Activated naive CD4-positive, alpha-beta T cell treated with anti-CD3 and anti-CD28 coated beads, Interleukin-2, amount 10 ng/mL, durations not matched to agents 7 days and 5 days (primary cell): ENCODE measurements at regions of chr7 and their contacts with region 1.

Region 1: DNA sequence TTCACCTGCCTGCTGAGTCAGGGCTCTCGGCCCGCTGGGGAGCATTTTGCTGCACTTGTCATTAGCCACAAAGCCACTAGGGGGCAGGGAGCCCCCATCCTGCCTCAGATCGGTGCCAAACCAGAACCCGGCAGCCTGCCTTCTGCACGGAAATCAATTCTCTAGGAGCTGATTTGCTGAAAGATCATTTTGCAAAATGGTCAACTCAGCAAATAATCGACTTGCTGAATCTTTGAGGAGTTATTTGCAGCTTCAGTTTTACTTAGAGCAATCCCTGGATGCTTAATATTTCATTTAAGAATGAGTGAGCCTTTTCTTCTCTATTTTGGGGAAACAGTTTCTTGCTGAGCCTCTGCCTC is 1.7 kb upstream of the GIMAP8 start:
- DNase-seq: peak; percentile 92
- H3K4me3 Mint-ChIP-seq: peak overlapping the region; percentile 89
- H3K27ac Mint-ChIP-seq: peak overlapping the region; percentile 91
- H3K4me1 Mint-ChIP-seq: peaks cover 52% of the 10 kb centered on the region
- H3K27me3 Mint-ChIP-seq: no peaks in the 10 kb centered on the region

Region 2: GRCh38 chr7:150514748-150515222 is 66.0 kb after region 1 on chr7 and contains the start of gene GIMAP7:
- CTCF ChIA-PET with region 1: interaction called, 44 read pairs
- DNase-seq: peak; percentile 83
- H3K4me3 Mint-ChIP-seq: peak within 1 kb of the TSS; percentile 98
- H3K27ac Mint-ChIP-seq: peak within 1 kb of the TSS; percentile 99
- H3K4me1 Mint-ChIP-seq: peaks cover 48% of the 10 kb centered on the region
- H3K27me3 Mint-ChIP-seq: no peaks in the 10 kb centered on the region

Region 3: DNA sequence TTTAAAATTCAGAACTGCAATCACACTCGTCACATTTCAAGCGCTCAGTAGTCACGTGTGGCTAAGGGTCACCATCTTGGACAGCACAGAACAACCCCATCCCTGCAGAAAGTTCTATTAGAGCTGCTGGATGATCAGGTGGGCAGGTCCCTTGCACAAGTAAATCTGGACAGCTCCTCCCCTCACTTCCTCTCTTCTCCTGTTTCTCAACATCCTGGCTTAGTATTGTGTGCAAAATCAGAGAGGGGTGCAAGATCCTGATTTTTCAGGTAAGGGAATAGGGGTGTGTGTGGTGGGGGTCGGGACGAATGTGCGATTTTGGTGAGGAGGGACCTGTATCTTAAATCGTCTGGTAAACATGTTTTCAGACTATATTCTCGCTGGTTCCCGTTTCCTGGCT is 118.4 kb after region 1 on chr7 and contains the start of gene GIMAP4:
- CTCF ChIA-PET with region 1: interaction called, 37 read pairs
- DNase-seq: peak; percentile 52
- H3K4me3 Mint-ChIP-seq: peak within 1 kb of the TSS; percentile 90
- H3K27ac Mint-ChIP-seq: peak within 1 kb of the TSS; percentile 92
- H3K4me1 Mint-ChIP-seq: peaks cover 75% of the 10 kb centered on the region
- H3K27me3 Mint-ChIP-seq: no peaks in the 10 kb centered on the region

Region 4: DNA sequence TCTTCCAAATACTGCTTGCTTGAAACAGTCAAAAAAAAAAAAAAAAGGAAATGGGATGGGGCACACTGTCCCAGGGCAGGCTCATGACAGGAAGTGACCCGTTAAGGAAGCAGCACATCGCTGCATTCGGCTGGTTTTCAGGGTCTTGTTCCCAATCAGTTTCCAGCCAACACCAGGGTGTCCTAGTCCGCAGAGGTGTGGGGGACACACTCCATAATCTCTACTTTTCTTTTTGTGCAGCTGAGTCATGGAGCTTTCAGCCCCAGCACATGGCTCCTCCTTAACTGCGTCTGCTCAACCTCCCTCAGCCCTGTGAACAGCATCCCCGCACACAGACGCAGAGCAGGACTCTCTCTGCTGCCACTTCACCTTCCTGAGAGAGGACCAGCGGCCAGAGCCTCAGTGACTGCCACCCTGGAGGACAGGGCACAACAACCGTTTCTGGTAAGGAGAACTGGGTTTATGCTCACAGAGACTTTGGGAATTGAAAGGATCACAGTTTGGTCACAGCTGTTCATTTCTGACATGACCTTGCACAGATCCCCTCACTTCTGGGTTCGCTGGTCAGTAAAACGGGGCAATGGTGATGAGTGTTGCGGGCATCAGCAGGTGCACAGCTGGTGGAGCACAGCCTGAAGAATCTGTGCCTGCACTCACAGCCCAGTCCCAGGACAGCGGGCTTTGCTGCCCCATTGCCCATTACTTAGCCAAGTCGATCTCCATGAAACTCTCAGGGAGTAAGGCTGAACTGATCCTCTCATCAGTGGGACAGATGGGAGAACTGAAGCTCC is 288.7 kb after region 1 on chr7 and contains the start of gene GIMAP5:
- CTCF ChIA-PET with region 1: interaction called, 15 read pairs
- DNase-seq: peak; percentile 73
- H3K4me3 Mint-ChIP-seq: peak within 1 kb of the TSS; percentile 88
- H3K27ac Mint-ChIP-seq: peak within 1 kb of the TSS; percentile 91
- H3K4me1 Mint-ChIP-seq: peaks cover 72% of the 10 kb centered on the region
- H3K27me3 Mint-ChIP-seq: no peaks in the 10 kb centered on the region

Region 5: DNA sequence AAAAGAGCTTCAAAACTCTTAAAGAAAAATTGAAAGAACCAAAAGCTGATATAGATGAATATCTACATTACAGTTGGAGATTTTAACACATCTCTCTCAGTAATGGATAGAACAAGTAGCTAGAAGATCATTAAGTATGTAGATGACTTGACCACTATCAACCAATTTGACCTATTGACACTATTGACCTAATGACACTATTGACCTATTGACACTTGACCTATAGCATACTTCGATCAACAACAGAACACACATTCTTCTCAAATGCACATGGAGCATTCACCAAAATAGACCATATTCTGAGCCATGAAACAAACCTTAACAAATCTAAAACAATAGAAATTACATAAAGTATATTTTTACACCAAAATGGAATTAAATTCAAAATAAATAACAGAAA is 310.7 kb after region 1 on chr7:
- CTCF ChIA-PET with region 1: interaction called, 72 read pairs
- DNase-seq: no peak
- H3K4me3 Mint-ChIP-seq: no peak overlapping the region
- H3K27ac Mint-ChIP-seq: no peak overlapping the region
- H3K4me1 Mint-ChIP-seq: peaks cover 32% of the 10 kb centered on the region
- H3K27me3 Mint-ChIP-seq: no peaks in the 10 kb centered on the region